Transverse colon (tissue), 4 donors: ENCODE measurements at regions of chr11 and their contacts with region 1.

Region 1: DNA sequence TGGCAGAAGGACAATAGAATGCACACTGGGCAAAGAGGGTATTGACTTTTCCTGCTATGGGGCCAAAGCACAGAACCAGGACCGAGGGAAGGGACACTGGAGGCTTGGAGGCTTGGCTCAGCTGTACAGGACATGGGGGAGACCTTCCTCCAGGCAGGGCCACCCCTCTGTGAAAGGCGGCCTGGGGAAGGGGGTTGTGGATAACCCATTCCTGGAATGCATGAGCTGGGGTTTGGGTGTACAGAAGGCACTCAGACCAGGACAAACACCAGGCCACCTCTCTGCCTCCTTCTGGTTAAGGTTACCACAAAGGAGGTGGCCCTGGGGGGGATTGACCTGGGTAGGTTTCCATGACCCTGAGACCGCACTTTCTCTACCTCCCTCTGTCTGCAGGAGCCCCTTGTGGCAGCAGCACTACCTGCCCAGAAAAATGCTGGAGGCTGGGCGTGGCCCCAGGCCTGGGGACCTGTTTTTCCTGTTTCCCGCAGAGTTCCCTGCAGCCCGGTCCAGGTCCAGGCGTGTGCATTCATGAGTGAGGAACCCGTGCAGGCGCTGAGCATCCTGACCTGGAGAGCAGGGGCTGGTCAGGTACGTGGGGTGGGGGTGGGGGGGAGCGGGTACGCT is 9.6 kb downstream of the P2RY2 start:
- DNase-seq: peak; percentile 84
- H3K4me3 ChIP-seq: no peak overlapping the region
- H3K27ac ChIP-seq: peak overlapping the region in 1 of 4 donors; percentile 26
- H3K4me1 ChIP-seq: peaks cover 0 to 7% (median 3%) of the 10 kb centered on the region in 4 donors
- H3K27me3 ChIP-seq: no peaks in the 10 kb centered on the region
- CTCF ChIP-seq: peak in 4 of 5 experiments; percentile 19 to 66 (median 42)
- EP300 ChIP-seq: no peak
- POLR2A ChIP-seq: no peak

Region 2: DNA sequence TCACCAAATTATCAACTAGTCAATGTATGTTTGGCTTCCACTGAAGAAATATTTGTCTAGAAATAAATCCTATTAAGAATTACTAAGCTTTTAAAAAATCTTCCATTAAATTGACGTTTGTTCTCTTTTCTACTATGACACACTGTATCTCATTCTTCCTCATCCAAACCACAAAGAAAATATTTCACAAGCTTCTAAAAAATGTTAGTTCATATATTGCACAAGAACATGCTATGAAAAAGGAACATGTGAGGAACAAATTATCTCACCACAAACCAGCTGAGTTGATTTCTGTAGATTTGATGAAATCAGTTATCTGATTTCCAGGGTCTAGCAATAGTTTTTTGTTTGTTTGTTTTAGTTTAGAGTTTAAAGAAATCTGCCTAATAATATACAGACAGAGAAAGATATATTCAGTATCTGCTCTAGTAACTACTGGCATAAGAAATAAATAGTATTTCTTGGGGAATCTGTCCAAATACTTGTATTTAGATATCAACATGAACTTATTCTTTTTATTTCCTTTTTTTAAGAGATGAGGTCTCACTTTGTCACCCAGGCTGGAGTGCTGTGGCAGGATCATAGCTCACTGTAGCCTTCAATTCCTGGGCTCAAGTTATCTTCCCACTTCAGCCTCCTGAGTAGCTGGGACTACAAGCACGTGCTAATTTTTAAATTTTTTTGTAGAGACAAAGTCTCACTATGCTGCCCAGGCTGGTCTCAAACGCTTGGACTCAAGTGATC is 251.8 kb before region 1 on chr11:
- in situ Hi-C with region 1: no loop called
- intact Hi-C with region 1: loop called (anchors 5 kb)
- DNase-seq: no peak
- H3K4me3 ChIP-seq: no peak overlapping the region
- H3K27ac ChIP-seq: peak overlapping the region; percentile 3 to 60 (median 36)
- H3K4me1 ChIP-seq: peaks cover 0 to 22% (median 6%) of the 10 kb centered on the region in 4 donors
- H3K27me3 ChIP-seq: no peaks in the 10 kb centered on the region
- CTCF ChIP-seq: no peak
- EP300 ChIP-seq: no peak
- POLR2A ChIP-seq: no peak

Region 3: DNA sequence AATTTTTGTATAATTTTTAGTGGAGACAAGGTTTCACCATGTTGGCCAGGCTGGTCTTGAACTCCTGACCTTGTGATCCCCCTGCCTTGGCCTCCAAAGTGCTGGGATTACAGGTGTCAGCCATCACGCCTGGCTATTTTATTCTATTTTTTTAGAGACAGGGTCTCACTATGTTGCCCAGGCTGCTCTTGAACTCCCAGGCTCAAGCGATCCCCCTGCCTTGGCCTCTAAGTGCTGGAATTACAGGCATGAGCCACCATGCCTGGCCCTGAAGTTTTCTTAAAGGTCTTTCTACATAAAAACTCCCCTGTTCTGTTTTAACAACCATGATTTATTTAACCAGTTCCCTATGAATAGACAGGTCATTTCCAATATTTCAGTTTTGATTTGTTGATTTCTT is 28.2 kb after region 1 on chr11:
- in situ Hi-C with region 1: no loop called
- intact Hi-C with region 1: loop called (anchors 1 kb)
- DNase-seq: no peak
- H3K4me3 ChIP-seq: no peak overlapping the region
- H3K27ac ChIP-seq: no peak overlapping the region
- H3K4me1 ChIP-seq: peaks cover 0 to 8% (median 2%) of the 10 kb centered on the region in 4 donors
- H3K27me3 ChIP-seq: no peaks in the 10 kb centered on the region
- CTCF ChIP-seq: no peak
- EP300 ChIP-seq: no peak
- POLR2A ChIP-seq: no peak